HEK293T (cell line): ENCODE measurements at regions of chr22 and their contacts with region 1.

Region 1: DNA sequence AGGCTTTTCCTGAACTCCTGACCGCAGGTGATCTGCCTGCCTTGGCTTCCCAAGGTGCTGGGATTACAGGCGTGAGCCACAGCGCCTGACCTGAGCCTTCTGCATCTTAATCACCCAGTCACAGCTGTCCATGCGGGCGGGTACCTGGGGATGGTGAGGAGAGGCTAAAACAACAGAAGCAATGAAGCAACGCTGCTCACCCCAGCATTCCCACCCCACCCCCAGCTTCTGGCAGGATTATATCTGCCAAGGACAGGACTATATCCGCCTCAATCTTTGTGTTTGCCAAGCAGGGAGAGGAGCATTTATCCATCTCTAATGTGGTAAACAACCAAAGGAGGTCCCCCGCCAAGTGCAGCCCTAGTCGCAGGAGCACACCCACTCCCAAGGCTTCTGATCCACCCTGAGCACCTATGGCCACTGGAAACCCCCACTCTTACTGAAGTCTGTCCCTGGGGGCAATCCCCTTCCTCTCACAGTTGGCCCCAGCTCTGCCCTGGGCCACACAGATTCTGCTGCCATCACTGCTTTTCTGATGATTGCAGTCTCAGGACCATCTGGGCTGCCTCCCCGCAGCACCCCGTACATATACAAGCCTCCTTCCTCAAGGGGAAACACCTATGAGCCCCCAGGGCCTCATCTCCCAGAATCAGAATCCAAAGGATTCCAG is 8.8 kb upstream of the LGALS2 start:
- DNase-seq: no peak

Region 2: GRCh38 chr22:37419969-37420685 is 168.6 kb before region 1 on chr22:
- CTCF ChIA-PET with region 1: no interaction called
- POLR2A ChIA-PET with region 1: no interaction called
- DNase-seq: no peak

Region 3: GRCh38 chr22:37472418-37473006 is 116.2 kb before region 1 on chr22:
- CTCF ChIA-PET with region 1: interaction called, 13 read pairs
- POLR2A ChIA-PET with region 1: interaction called, 3 read pairs
- DNase-seq: peak; percentile 71

Region 4: GRCh38 chr22:37521236-37521739 is 67.4 kb before region 1 on chr22:
- CTCF ChIA-PET with region 1: no interaction called
- POLR2A ChIA-PET with region 1: no interaction called
- DNase-seq: no peak

Region 5: GRCh38 chr22:37538590-37539357 is 49.9 kb before region 1 on chr22:
- CTCF ChIA-PET with region 1: interaction called, 51 read pairs
- POLR2A ChIA-PET with region 1: interaction called, 7 read pairs
- DNase-seq: peak; percentile 99

Region 6: GRCh38 chr22:37544955-37545699 is 43.6 kb before region 1 on chr22:
- CTCF ChIA-PET with region 1: interaction called, 51 read pairs
- POLR2A ChIA-PET with region 1: interaction called, 7 read pairs
- DNase-seq: peak; percentile 82

Region 7: GRCh38 chr22:37561212-37562048 is 27.3 kb before region 1 on chr22:
- CTCF ChIA-PET with region 1: interaction called, 30 read pairs
- POLR2A ChIA-PET with region 1: interaction called, 12 read pairs
- DNase-seq: peak; percentile 94

Region 8: DNA sequence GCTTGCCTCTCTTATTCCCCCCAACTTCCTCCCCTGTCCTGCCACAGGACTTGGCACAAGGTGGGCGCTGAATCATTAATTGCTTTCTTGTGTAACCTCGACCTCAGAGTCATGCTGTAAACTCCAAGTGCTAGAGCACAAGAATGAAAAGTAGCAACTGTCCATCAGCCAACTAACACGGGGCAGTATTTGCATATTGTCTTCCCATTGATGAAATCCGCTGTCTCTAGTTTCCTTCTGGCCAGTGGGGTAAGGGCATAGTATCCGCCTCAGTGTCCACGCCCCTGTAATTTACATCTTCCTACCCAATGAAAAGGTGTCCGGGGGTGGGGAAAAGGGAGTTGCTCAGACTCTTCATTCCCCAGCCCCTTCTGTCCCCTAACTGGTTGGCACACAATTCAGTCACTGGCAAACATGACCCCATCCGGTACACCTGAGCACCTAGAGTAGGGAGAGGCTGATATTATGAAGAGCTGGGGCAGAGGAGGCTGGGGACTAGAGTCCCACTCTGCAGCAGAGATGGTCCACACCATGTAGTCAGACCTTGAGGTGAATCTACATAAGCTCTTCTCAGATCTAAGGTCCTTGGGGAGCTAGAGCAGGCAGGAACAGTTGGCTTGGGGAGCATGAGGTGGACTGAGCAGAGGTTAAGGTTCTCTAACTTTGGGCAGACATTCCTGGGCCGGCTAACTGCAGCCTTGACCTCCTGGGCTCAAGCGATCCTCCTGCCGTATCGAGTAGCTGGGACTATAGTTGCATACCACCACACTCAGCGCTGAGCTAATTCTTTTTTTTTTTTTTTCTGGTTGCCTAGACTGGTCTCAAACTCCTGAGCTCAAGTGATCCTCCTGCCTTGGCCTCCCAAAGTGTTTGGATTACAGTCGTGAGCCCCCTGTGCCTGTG is 13.1 kb after region 1 on chr22:
- CTCF ChIA-PET with region 1: interaction called, 47 read pairs
- POLR2A ChIA-PET with region 1: interaction called, 32 read pairs
- DNase-seq: peak; percentile 60

Region 9: GRCh38 chr22:37623075-37624016 is 34.7 kb after region 1 on chr22:
- CTCF ChIA-PET with region 1: no interaction called
- POLR2A ChIA-PET with region 1: no interaction called
- DNase-seq: peak; percentile 86

Region 10: GRCh38 chr22:37636186-37636948 is 47.7 kb after region 1 on chr22:
- CTCF ChIA-PET with region 1: no interaction called
- POLR2A ChIA-PET with region 1: no interaction called
- DNase-seq: no peak